MCF 10A (cell line): ENCODE measurements at regions of chr1 and their contacts with region 1.

Region 1: DNA sequence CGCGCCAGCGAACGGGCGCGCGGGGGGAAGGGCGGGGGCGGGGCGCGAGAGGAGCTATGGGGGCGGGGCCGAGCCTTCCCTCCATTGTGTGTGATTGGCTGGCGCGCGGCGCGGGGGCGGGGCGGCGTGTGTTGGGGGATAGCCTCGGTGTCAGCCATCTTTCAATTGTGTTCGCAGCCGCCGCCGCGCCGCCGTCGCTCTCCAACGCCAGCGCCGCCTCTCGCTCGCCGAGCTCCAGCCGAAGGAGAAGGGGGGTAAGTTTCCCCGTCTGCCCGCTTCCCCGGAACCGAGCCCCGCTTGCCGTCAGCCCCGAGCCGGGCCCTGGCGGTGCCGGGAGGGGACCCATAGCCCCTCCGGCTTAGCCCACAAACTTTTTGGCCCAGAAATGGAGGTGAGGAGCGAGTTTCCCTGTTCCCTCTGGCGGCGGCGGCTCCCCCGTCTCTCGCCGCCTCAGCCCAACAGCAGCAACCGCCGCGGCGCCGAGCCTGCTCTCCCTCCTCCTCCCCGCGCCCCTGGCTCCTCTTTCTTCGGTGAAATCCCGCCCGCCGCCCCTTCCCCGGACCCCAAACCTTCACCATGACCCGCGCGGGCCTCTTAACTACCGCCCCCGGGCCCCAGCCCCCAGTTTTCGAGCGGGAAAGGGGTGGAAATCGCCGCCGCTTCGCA is at the start of gene H3-3A:
- DNase-seq: peak; percentile 100
- H3K4me3 Mint-ChIP-seq: peak within 1 kb of the TSS; percentile 100
- H3K27ac Mint-ChIP-seq: peak within 1 kb of the TSS; percentile 99
- H3K4me1 Mint-ChIP-seq: peaks cover 35% of the 10 kb centered on the region
- H3K27me3 Mint-ChIP-seq: no peaks in the 10 kb centered on the region
- CTCF ChIP-seq: no peak
- total RNA-seq, gene H3-3A: 635 and 710 TPM in 2 replicates

Region 2: GRCh38 chr1:225871359-225872074 is 191.2 kb before region 1 on chr1:
- CTCF ChIA-PET with region 1: no interaction called
- POLR2A ChIA-PET with region 1: no interaction called
- intact Hi-C with region 1: no loop called
- DNase-seq: no peak
- H3K4me3 Mint-ChIP-seq: no peak overlapping the region
- H3K27ac Mint-ChIP-seq: no peak overlapping the region
- H3K4me1 Mint-ChIP-seq: peaks cover 13% of the 10 kb centered on the region
- H3K27me3 Mint-ChIP-seq: no peaks in the 10 kb centered on the region
- CTCF ChIP-seq: no peak

Region 3: DNA sequence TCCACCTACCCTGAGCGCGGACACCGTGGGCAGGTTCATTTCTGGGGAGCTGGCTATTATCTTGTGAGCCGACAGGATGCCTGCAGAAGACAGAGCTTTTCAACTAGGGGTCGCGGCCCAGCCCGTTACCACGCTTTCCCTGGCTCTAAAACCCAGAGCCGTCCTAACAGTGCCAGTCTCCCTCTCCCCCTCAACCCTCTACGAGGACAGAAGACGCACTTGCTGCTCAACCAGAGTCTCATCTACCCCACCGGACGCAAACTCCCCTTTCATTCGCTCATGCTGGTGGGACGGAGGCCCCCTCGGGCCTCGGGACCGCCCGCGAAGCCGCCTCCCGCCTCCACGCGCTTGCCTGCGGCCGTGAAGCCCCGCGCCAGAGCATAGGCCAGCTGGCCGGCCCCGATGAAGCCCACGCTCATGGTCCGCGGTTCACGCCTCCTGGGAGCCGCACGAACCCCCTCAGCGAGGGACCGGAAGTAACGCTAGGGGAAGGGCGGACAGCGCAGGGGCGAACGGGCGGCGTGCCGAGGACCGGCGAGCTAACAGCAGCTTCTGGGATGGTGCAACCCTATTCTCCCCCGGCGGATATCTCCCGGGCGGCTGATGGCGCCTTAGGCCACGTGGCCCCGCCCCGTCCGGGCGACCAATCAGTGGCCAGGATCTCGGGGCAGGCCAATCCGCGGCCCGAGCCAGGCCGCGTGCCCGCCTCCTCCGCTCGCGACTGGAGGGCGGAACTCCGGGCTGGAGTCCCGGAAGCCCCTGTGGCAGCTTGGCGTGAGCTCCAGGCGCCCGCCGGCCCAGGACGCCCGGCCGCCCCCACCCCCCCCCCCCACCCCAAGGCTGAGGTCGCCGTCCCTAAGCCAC is 138.8 kb before region 1 on chr1 and contains the start of gene PYCR2:
- CTCF ChIA-PET with region 1: no interaction called
- POLR2A ChIA-PET with region 1: interaction called, 22 read pairs
- intact Hi-C with region 1: no loop called
- DNase-seq: peak; percentile 99
- H3K4me3 Mint-ChIP-seq: peak within 1 kb of the TSS; percentile 99
- H3K27ac Mint-ChIP-seq: peak within 1 kb of the TSS; percentile 95
- H3K4me1 Mint-ChIP-seq: peaks cover 42% of the 10 kb centered on the region
- H3K27me3 Mint-ChIP-seq: no peaks in the 10 kb centered on the region
- CTCF ChIP-seq: no peak
- total RNA-seq, gene PYCR2: 172 and 173 TPM in 2 replicates

Region 4: DNA sequence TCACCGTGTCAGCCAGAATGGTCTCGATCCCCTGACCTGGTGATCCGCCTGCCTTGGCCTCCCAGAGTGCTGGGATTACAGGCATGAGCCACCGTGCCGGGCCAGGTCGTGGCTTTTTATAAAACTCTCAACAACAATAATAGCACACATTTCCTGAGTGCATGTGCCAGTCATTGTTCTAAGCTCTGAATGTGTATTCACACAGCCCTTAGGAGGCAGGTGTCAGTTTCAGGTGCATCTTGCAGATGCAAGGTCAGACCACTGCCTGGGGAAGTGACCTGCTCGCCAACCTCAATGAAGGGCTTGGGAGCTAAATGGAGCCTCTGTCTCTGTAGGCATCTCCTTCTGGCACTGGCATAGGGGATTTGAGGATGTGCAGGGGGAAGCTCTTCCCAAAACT is 120.1 kb before region 1 on chr1:
- CTCF ChIA-PET with region 1: no interaction called
- POLR2A ChIA-PET with region 1: no interaction called
- intact Hi-C with region 1: no loop called
- DNase-seq: no peak
- H3K4me3 Mint-ChIP-seq: no peak overlapping the region
- H3K27ac Mint-ChIP-seq: no peak overlapping the region
- H3K4me1 Mint-ChIP-seq: no peaks in the 10 kb centered on the region
- H3K27me3 Mint-ChIP-seq: peaks cover 7% of the 10 kb centered on the region
- CTCF ChIP-seq: no peak

Region 5: DNA sequence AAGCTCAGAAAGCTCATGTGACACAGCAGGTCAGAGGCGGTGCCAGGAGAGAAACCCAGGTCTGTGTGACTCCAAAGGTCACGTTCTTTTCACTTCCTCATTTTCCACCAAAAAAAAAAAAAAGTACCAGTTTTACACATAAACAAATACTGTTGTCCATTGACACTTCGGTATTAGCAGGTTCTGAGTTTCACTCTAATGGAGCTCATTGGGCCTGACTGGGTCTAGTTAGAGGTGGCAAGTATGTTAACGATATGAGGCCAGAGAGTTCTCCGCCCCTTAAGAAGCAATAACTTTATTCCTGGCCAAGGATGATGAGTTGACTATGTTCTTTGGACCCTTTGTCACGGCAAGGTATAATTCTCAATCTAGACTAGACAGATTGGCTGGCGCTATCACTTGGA is 33.6 kb before region 1 on chr1:
- CTCF ChIA-PET with region 1: interaction called, 3 read pairs
- POLR2A ChIA-PET with region 1: interaction called, 16 read pairs
- intact Hi-C with region 1: no loop called
- DNase-seq: no peak
- H3K4me3 Mint-ChIP-seq: no peak overlapping the region
- H3K27ac Mint-ChIP-seq: no peak overlapping the region
- H3K4me1 Mint-ChIP-seq: peaks cover 12% of the 10 kb centered on the region
- H3K27me3 Mint-ChIP-seq: no peaks in the 10 kb centered on the region
- CTCF ChIP-seq: no peak

Region 6: DNA sequence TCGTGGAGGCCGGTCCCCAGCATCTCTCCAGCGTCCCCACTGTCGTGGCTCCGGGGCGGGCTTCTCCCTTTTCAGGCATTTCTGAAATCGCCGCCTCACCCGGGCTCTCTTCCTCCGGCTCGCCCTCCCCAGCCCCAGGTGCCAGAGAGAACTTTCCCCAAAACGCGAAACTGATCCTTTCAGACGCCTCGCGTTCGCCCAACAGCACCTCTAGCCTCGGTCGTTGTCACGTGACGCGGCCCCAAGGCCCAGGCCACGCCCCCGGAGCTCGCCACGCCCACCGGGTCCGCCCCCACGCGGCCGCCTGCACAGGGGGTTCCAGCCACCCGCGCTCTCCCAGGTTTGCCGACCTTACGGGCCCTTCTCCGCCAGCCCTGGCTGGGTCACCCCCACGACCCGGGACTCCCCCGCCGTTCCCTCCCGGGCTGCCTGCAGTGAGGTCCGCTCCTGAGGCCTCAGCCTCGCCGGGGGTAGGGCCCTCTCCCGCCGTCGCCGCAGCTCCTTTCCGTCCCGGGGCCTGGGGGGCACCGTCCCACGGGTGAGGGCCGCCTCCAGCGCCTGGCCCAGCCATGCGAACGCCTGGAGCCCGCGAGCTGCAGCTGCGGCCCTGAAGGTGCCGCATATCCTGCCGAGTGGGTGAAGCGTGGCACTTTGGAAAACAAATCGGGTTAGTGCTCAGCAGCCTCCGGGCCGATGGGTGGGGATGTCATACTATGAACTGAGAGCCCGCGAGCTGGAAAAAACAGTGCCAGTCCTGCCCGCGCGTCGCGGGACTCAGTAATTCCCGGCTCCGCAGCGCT is 20.8 kb after region 1 on chr1:
- CTCF ChIA-PET with region 1: interaction called, 98 read pairs
- POLR2A ChIA-PET with region 1: interaction called, 99 read pairs
- intact Hi-C with region 1: loop called (anchors 2 kb)
- DNase-seq: peak; percentile 97
- H3K4me3 Mint-ChIP-seq: peak overlapping the region; percentile 83
- H3K27ac Mint-ChIP-seq: peak overlapping the region; percentile 24
- H3K4me1 Mint-ChIP-seq: peaks cover 6% of the 10 kb centered on the region
- H3K27me3 Mint-ChIP-seq: no peaks in the 10 kb centered on the region
- CTCF ChIP-seq: no peak

Region 7: DNA sequence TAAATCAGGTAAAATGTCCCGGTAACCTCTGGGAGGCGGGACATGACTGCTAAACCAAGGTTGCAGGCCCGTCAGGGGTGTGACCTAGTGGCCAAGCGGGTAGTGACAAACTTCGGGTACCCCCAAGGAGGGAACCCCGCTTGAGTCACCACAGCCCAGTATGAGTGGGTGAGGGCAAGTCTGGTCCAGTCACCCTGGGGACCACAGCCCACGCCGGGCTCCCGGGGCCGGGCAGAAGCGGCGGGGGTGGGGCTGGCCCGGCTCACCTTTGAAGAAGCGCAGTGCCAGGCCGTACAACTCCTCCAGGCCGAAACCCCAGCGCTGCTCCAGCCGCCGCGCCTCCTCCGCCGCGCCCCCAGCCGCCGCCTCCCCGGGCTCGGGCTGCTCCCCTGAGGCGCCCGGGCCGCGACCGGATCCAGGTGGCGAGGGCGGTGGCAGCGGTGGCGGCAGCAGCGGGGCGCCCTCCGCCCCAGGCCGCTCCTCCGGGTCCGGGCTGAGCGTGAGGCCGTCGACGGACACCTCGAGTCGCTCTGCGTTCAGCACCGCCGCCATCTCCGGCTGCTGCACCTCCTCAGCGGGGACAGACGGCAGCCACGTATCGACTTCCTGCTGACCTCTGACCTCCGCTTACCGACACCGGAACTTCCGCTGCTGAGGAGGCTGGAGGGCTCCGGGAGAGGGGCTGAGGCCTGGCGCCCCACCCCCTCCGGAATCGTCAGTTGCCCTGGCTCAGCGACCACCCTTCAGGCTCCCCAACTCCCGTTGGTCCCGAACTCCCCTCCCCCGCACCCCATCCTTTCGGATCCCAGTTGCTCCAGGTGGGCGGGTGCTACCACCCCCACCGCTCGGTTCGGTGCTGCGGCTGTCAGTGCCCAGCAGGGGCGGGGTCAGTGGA is 123.7 kb after region 1 on chr1 and contains the start of gene ACBD3:
- CTCF ChIA-PET with region 1: interaction called, 31 read pairs
- POLR2A ChIA-PET with region 1: interaction called, 30 read pairs
- intact Hi-C with region 1: loop called (anchors 5 kb)
- DNase-seq: peak; percentile 91
- H3K4me3 Mint-ChIP-seq: peak within 1 kb of the TSS; percentile 93
- H3K27ac Mint-ChIP-seq: peak within 1 kb of the TSS; percentile 93
- H3K4me1 Mint-ChIP-seq: peaks cover 35% of the 10 kb centered on the region
- H3K27me3 Mint-ChIP-seq: no peaks in the 10 kb centered on the region
- CTCF ChIP-seq: no peak
- total RNA-seq, gene ACBD3: 93.9 and 122 TPM in 2 replicates

Region 8: GRCh38 chr1:226407497-226408284 is 345.0 kb after region 1 on chr1 and contains the start of gene PARP1:
- CTCF ChIA-PET with region 1: interaction called, 5 read pairs
- POLR2A ChIA-PET with region 1: interaction called, 31 read pairs
- intact Hi-C with region 1: loop called (anchors 10 kb)
- DNase-seq: peak; percentile 98
- H3K4me3 Mint-ChIP-seq: peak within 1 kb of the TSS; percentile 78
- H3K27ac Mint-ChIP-seq: peak within 1 kb of the TSS; percentile 82
- H3K4me1 Mint-ChIP-seq: peaks cover 38% of the 10 kb centered on the region
- H3K27me3 Mint-ChIP-seq: no peaks in the 10 kb centered on the region
- CTCF ChIP-seq: peak; percentile 99
- total RNA-seq, gene PARP1: 192 and 235 TPM in 2 replicates